ENCODE measurements at regions of chr5 and their contacts with region 1.

Region 1: GRCh38 chr5:138575194-138576015 is at the start of gene HSPA9:
- DNase-seq: peak; percentile 100
- H3K4me3 ChIP-seq: peak within 1 kb of the TSS; percentile 89 to 100 (median 100)
- H3K27ac ChIP-seq: peak within 1 kb of the TSS; percentile 97
- H3K4me1 ChIP-seq: peaks cover 10% of the 10 kb centered on the region
- H3K27me3 ChIP-seq: no peaks in the 10 kb centered on the region
- CTCF ChIP-seq: no peak
- POLR2A ChIP-seq: peak; percentile 76
- total RNA-seq, gene HSPA9: 180 and 192 TPM in 2 replicates

Region 2: GRCh38 chr5:138303369-138303768 is 272.0 kb before region 1 on chr5:
- CTCF ChIA-PET with region 1: no interaction called
- POLR2A ChIA-PET with region 1: no interaction called
- dilution Hi-C with region 1: no loop called
- intact Hi-C with region 1: no loop called
- DNase-seq: peak; percentile 12
- H3K4me3 ChIP-seq: no peak overlapping the region
- H3K27ac ChIP-seq: no peak overlapping the region
- H3K4me1 ChIP-seq: no peaks in the 10 kb centered on the region
- H3K27me3 ChIP-seq: no peaks in the 10 kb centered on the region
- CTCF ChIP-seq: no peak
- POLR2A ChIP-seq: no peak

Region 3: DNA sequence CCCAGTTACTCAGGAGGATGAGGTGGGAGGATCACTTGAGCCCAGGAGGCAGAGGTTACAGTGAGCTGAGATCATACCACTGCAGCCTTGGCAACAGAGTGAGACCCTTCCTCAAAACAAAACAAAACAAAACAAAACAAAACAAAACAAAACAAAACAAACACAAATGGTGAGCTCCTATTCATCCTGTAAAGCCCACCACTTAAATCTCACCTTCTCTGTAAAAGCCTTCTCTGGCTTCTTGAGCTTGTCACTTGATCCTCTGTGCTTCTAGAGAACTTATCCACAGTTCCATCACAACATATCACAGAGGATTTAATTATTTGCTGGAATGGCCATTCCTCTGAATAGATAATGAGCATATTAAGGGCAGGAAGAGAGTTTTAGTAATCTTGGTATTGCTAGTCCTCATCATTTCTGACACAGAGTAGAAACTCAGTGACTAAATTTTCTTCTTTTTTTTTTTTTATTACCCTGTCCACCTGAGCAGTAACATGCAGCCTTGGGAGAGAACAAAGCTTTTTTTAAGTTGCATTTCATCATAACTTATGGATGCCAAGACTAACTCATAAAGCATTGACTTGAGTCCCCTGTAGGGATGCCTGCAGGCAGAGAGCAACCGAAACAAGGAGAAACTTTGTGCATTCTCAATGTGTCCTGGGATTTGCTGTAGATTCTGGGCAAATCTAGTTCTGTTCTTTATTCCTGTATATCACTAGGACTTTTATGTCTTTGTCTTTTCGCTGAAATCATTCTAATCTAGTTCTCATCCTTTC is 12.8 kb after region 1 on chr5:
- CTCF ChIA-PET with region 1: interaction called, 19 read pairs
- POLR2A ChIA-PET with region 1: no interaction called
- dilution Hi-C with region 1: no loop called
- intact Hi-C with region 1: no loop called
- DNase-seq: no peak
- H3K4me3 ChIP-seq: no peak overlapping the region
- H3K27ac ChIP-seq: no peak overlapping the region
- H3K4me1 ChIP-seq: no peaks in the 10 kb centered on the region
- H3K27me3 ChIP-seq: peaks cover 2 to 8% of the 10 kb centered on the region in 2 experiments
- CTCF ChIP-seq: no peak
- POLR2A ChIP-seq: no peak

Region 4: GRCh38 chr5:138610918-138611677 is 35.7 kb after region 1 on chr5:
- CTCF ChIA-PET with region 1: interaction called, 22 read pairs
- POLR2A ChIA-PET with region 1: interaction called, 5 read pairs
- dilution Hi-C with region 1: no loop called
- intact Hi-C with region 1: loop called (anchors 2 kb)
- DNase-seq: no peak
- H3K4me3 ChIP-seq: peak overlapping the region in 2 of 3 experiments; percentile 20 to 24
- H3K27ac ChIP-seq: no peak overlapping the region
- H3K4me1 ChIP-seq: peaks cover 14% of the 10 kb centered on the region
- H3K27me3 ChIP-seq: peaks cover 3 to 8% of the 10 kb centered on the region in 2 experiments
- CTCF ChIP-seq: no peak
- POLR2A ChIP-seq: no peak

Region 5: DNA sequence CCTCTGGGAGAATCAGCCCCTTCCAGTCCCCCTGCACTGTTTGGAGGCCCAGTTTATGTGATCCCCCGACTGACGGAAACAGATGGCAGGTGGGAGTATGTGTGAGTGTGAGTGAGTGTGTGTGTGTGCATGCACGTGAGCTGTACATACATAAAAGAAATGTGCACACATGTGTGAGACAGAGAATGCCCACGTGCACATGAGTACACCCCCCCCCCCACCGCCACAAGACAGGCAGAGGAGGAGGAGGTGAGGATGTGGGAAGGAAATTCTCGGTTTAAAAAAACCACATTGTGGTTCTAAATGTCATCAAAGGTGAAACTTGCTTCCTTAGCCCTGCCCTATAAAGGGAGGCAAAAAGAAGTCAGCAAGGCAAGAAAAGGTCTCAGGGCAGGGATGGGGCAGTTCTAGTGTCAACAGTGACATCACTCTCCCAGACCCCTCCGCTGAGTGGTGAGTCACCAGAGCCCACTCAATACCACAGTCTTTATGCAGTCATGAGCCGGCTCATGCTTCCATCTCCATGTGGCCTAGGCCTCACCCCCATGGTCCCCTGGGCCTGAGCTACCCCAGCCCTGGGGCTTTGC is 79.0 kb after region 1 on chr5:
- CTCF ChIA-PET with region 1: interaction called, 12 read pairs
- POLR2A ChIA-PET with region 1: no interaction called
- dilution Hi-C with region 1: no loop called
- intact Hi-C with region 1: no loop called
- DNase-seq: peak; percentile 45
- H3K4me3 ChIP-seq: no peak overlapping the region
- H3K27ac ChIP-seq: no peak overlapping the region
- H3K4me1 ChIP-seq: peaks cover 8% of the 10 kb centered on the region
- H3K27me3 ChIP-seq: peaks cover 0 to 2% of the 10 kb centered on the region in 2 experiments
- CTCF ChIP-seq: no peak
- POLR2A ChIP-seq: no peak

Region 6: GRCh38 chr5:138789771-138790242 is 214.4 kb after region 1 on chr5:
- CTCF ChIA-PET with region 1: interaction called, 13 read pairs
- POLR2A ChIA-PET with region 1: no interaction called
- dilution Hi-C with region 1: no loop called
- intact Hi-C with region 1: no loop called
- DNase-seq: peak; percentile 50
- H3K4me3 ChIP-seq: no peak overlapping the region
- H3K27ac ChIP-seq: no peak overlapping the region
- H3K4me1 ChIP-seq: no peaks in the 10 kb centered on the region
- H3K27me3 ChIP-seq: no peaks in the 10 kb centered on the region
- CTCF ChIP-seq: peak; percentile 65 to 67
- POLR2A ChIP-seq: no peak

Region 7: GRCh38 chr5:139273572-139274289 is 698.3 kb after region 1 on chr5:
- CTCF ChIA-PET with region 1: interaction called, 8 read pairs
- POLR2A ChIA-PET with region 1: no interaction called
- dilution Hi-C with region 1: no loop called
- intact Hi-C with region 1: loop called (anchors 1 kb)
- DNase-seq: peak; percentile 81
- H3K4me3 ChIP-seq: peak overlapping the region; percentile 53 to 87 (median 55)
- H3K27ac ChIP-seq: peak overlapping the region; percentile 75
- H3K4me1 ChIP-seq: peaks cover 27% of the 10 kb centered on the region
- H3K27me3 ChIP-seq: no peaks in the 10 kb centered on the region
- CTCF ChIP-seq: no peak
- POLR2A ChIP-seq: peak; percentile 95